ENCODE measurements at regions of chr20 and their contacts with region 1.

Region 1: DNA sequence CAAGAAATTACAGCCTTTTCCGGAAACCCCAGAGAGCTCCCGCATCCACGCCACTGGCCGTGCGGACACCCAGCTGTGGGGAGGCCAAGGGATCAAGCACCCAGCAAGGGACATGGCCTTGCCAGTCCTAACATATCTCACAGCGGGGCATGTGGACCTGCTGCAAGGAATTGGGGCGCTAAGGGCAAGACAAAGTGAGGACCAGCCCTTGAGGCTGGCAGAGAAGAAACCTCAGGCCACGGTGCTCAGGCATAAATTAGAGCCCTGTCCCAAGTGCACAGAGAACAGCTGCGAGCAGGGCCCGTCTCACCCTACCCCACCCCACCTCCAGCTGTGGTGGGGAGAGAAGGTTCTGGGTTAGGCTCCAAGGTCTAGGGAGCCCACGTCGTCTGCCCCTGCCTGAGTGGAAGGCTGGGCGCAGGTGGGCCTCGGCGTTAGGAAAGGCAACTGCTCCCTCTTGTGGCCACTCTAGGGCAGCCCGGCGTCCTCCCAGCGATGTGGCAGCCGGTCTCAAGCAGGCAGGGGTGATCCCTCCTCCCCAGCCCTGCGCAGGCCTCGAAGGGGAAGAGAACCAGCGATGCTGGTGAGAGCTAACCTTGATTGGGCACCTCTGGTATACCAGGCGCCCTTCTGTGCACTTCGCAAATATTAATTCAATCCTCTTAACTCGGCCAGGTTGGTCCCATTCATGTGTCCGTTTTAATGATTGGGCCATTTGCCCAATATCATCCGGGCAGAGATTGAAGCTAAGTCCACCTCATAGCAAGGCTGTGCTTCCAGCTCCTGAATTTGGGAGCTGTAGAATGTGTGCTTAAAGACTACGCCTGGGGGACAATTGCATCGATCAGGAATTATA is 235.8 kb downstream of the NFATC2 start:
- DNase-seq: peak; percentile 58 to 74 (median 72)
- H3K4me3 ChIP-seq: no peak overlapping the region
- H3K27ac ChIP-seq: no peak overlapping the region
- H3K4me1 ChIP-seq: peaks cover 0 to 2% (median 0%) of the 10 kb centered on the region in 4 experiments
- H3K27me3 ChIP-seq: peaks cover 3 to 13% (median 6%) of the 10 kb centered on the region in 5 experiments

Region 2: GRCh38 chr20:50987592-50988210 is 319.0 kb before region 1 on chr20:
- CTCF ChIA-PET with region 1: interaction called, 184 read pairs
- POLR2A ChIA-PET with region 1: interaction called, 4 read pairs
- DNase-seq: peak; percentile 79 to 90 (median 82)
- H3K4me3 ChIP-seq: no peak overlapping the region
- H3K27ac ChIP-seq: no peak overlapping the region
- H3K4me1 ChIP-seq: no peaks in the 10 kb centered on the region
- H3K27me3 ChIP-seq: peaks cover 2 to 15% (median 8%) of the 10 kb centered on the region in 5 experiments

Region 3: GRCh38 chr20:50992733-50993457 is 313.8 kb before region 1 on chr20:
- CTCF ChIA-PET with region 1: interaction called, 184 read pairs
- POLR2A ChIA-PET with region 1: interaction called, 4 read pairs
- DNase-seq: peak; percentile 71 to 80 (median 80)
- H3K4me3 ChIP-seq: no peak overlapping the region
- H3K27ac ChIP-seq: no peak overlapping the region
- H3K4me1 ChIP-seq: no peaks in the 10 kb centered on the region
- H3K27me3 ChIP-seq: peaks cover 0 to 21% (median 16%) of the 10 kb centered on the region in 5 experiments

Region 4: GRCh38 chr20:51014797-51015722 is 291.7 kb before region 1 on chr20:
- CTCF ChIA-PET with region 1: interaction called, 11 read pairs
- POLR2A ChIA-PET with region 1: no interaction called
- DNase-seq: peak; percentile 9 to 16 (median 9)
- H3K4me3 ChIP-seq: no peak overlapping the region
- H3K27ac ChIP-seq: no peak overlapping the region
- H3K4me1 ChIP-seq: no peaks in the 10 kb centered on the region
- H3K27me3 ChIP-seq: peaks cover 0 to 64% (median 25%) of the 10 kb centered on the region in 5 experiments

Region 5: DNA sequence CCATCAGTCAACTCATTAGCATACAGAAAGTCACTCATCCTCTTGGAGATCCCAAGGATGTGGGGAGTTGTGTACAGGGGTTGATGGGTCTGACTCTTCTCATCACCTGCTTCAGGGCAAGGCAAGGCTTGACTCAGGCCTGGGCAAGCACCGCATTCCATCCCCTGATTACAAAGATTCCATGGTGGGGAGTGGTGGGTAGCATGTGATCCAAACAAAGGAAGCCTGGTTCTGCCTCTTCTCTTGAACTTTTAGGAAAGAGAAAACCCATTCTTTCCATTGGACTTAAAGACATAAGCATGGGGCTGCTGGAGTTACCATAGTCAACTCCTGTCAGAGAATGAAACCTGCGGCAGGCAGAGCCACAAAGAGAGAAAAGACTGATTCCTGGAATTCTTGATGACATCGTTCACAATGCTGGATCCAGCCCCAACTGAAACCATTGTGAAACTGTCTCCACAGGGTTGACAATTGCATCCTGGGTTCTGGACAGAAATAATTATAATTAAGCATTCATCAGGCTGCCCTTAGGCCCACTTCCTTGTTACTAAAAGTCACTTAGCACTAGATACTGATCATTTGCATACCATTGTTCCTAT is 48.0 kb before region 1 on chr20:
- CTCF ChIA-PET with region 1: no interaction called
- POLR2A ChIA-PET with region 1: no interaction called
- DNase-seq: no peak
- H3K4me3 ChIP-seq: no peak overlapping the region
- H3K27ac ChIP-seq: no peak overlapping the region
- H3K4me1 ChIP-seq: no peaks in the 10 kb centered on the region
- H3K27me3 ChIP-seq: peaks cover 0 to 15% (median 2%) of the 10 kb centered on the region in 5 experiments

Region 6: GRCh38 chr20:51318058-51318895 is 11.5 kb after region 1 on chr20:
- CTCF ChIA-PET with region 1: interaction called, 16 read pairs
- POLR2A ChIA-PET with region 1: no interaction called
- DNase-seq: peak; percentile 36 to 65 (median 63)
- H3K4me3 ChIP-seq: no peak overlapping the region
- H3K27ac ChIP-seq: no peak overlapping the region
- H3K4me1 ChIP-seq: no peaks in the 10 kb centered on the region
- H3K27me3 ChIP-seq: peaks cover 0 to 6% (median 0%) of the 10 kb centered on the region in 5 experiments

Region 7: GRCh38 chr20:51372176-51372803 is 65.6 kb after region 1 on chr20:
- CTCF ChIA-PET with region 1: no interaction called
- POLR2A ChIA-PET with region 1: no interaction called
- DNase-seq: peak; percentile 40 to 61 (median 53)
- H3K4me3 ChIP-seq: no peak overlapping the region
- H3K27ac ChIP-seq: no peak overlapping the region
- H3K4me1 ChIP-seq: peaks cover 0 to 31% (median 20%) of the 10 kb centered on the region in 4 experiments
- H3K27me3 ChIP-seq: no peaks in the 10 kb centered on the region